ENCODE measurements at regions of chr11 and their contacts with region 1.

Region 1: GRCh38 chr11:17384002-17384511 is 4.4 kb downstream of the KCNJ11 start:
- DNase-seq: peak in 1 of 2 donors; percentile 88
- H3K4me3 ChIP-seq: no peak overlapping the region
- H3K27ac ChIP-seq: no peak overlapping the region
- H3K4me1 ChIP-seq: peaks cover 7 to 8% of the 10 kb centered on the region in 2 donors
- H3K27me3 ChIP-seq: no peaks in the 10 kb centered on the region
- CTCF ChIP-seq: peak; percentile 87 to 96 (median 88)

Region 2: GRCh38 chr11:17504330-17505107 is 120.5 kb after region 1 on chr11:
- intact Hi-C with region 1: loop called (anchors 1 kb)
- DNase-seq: peak in 1 of 2 donors; percentile 87
- H3K4me3 ChIP-seq: no peak overlapping the region
- H3K27ac ChIP-seq: no peak overlapping the region
- H3K4me1 ChIP-seq: peaks cover 8 to 12% of the 10 kb centered on the region in 2 donors
- H3K27me3 ChIP-seq: no peaks in the 10 kb centered on the region
- CTCF ChIP-seq: peak; percentile 72 to 94 (median 85)